Endothelial cell of umbilical vein (primary cell): ENCODE measurements at regions of chr12 and their contacts with region 1.

Region 1: DNA sequence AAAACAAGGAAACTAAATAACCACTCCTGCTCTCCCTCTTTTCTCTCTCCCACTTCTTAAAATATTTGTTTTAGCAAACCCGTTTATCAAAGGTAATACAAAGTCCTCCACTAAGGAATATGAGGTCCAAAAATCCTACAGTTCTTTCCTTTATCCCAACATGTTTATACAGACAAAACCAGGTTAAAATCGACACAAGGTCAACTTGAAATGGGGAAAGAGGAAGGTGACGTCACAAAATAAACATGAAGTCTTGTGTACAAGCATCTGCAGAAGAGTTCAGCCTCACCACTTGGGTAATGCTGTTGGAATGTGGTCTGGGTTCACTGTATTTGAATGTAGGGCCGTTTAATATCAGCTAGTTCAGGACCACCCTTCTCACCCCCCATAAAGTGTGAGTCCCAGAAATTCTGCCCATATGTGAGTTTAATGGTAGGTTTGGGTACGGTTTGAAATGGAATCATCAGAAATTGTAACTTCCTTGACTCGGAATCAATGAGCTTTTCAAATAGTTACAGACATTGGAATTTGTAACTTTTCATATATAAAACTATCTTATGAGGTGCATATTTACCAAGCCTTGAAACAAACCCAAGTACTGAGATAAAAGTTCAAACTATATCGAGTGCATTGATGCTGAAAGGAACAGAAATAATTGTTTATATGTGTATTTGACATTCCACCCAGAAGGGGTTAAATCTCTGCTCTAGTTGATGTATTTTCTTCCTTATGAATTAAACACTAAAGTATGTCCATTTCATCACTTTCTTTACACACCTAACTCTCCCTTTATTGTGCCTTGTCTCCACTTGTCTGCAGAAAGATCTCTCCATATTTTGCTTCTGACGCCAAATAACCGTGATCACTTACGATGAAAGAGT is 120.1 kb upstream of the SLC38A2 start:
- DNase-seq: peak; percentile 93
- H3K4me3 ChIP-seq: no peak overlapping the region
- H3K27ac ChIP-seq: peak overlapping the region; percentile 97
- H3K4me1 ChIP-seq: peaks cover 43% of the 10 kb centered on the region
- H3K27me3 ChIP-seq: no peaks in the 10 kb centered on the region
- CTCF ChIP-seq: no peak
- POLR2A ChIP-seq: peak; percentile 63

Region 2: DNA sequence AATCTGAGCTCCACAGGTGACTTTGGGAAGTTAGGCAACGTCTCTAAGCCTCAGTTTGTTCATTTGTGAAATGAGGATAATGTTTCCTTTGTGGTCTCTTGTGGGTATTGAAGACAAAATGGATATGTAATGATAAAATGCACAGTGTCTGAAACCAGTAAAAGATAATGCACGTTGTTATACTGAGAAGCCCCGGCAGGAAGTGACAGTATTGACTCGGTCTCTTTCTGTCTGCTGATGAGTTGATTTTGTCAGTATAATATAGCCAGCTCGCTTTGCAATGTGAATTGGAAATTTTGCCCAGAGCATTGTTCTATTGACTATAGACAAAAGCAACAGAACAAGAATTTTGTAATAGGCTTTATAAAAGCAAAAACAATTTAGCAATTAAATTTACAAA is 174.7 kb before region 1 on chr12:
- CTCF ChIA-PET with region 1: no interaction called
- POLR2A ChIA-PET with region 1: no interaction called
- dilution Hi-C with region 1: no loop called
- intact Hi-C with region 1: no loop called
- DNase-seq: no peak
- H3K4me3 ChIP-seq: no peak overlapping the region
- H3K27ac ChIP-seq: no peak overlapping the region
- H3K4me1 ChIP-seq: peaks cover 10% of the 10 kb centered on the region
- H3K27me3 ChIP-seq: no peaks in the 10 kb centered on the region
- CTCF ChIP-seq: no peak
- POLR2A ChIP-seq: no peak

Region 3: GRCh38 chr12:46382964-46383653 is 109.6 kb before region 1 on chr12:
- CTCF ChIA-PET with region 1: interaction called, 3 read pairs
- POLR2A ChIA-PET with region 1: interaction called, 5 read pairs
- dilution Hi-C with region 1: no loop called
- intact Hi-C with region 1: loop called (anchors 1 kb)
- DNase-seq: peak; percentile 97
- H3K4me3 ChIP-seq: peak overlapping the region; percentile 39 to 68 (median 44)
- H3K27ac ChIP-seq: peak overlapping the region; percentile 98
- H3K4me1 ChIP-seq: peaks cover 44% of the 10 kb centered on the region
- H3K27me3 ChIP-seq: no peaks in the 10 kb centered on the region
- CTCF ChIP-seq: peak in 1 of 2 donors; percentile 14
- POLR2A ChIP-seq: peak; percentile 76

Region 4: GRCh38 chr12:46450279-46450748 is 42.4 kb before region 1 on chr12:
- CTCF ChIA-PET with region 1: no interaction called
- POLR2A ChIA-PET with region 1: no interaction called
- dilution Hi-C with region 1: no loop called
- intact Hi-C with region 1: loop called (anchors 1 kb)
- DNase-seq: peak; percentile 73
- H3K4me3 ChIP-seq: no peak overlapping the region
- H3K27ac ChIP-seq: peak overlapping the region; percentile 84
- H3K4me1 ChIP-seq: peaks cover 64% of the 10 kb centered on the region
- H3K27me3 ChIP-seq: no peaks in the 10 kb centered on the region
- CTCF ChIP-seq: no peak
- POLR2A ChIP-seq: no peak

Region 5: DNA sequence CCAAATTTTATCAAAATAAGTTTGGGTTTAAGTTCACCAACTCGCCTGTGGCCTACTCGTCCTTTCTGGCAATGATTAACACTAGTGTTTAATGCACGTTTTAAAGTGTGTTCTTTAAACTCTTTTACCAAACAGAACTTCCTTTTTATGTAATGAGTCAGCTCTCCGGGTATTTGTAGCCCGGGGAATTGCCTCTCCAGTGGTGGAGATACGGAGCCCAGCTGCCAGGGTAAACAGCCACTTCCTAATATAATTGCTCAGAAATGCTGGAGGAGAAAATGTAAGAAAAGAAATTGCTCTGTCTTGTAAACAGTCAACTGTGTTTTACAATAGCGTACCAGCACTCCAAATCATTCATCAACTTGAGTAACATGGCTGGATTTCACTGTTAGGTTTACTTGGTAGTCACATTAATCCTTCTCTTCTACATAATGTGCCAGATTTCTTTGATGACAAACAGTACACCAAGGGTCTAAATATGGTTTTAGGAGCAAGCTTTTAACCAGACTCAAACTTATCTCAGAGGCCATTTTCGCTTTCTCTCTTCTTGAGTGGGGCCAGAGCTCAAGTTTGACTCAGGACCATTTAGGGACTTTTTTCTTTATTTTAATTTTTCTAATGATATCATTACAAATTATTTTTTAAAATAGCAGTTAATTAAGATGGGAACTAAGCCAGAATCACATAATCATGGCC is 18.9 kb before region 1 on chr12:
- CTCF ChIA-PET with region 1: interaction called, 5 read pairs
- POLR2A ChIA-PET with region 1: interaction called, 4 read pairs
- dilution Hi-C with region 1: no loop called
- intact Hi-C with region 1: loop called (anchors 1 kb)
- DNase-seq: peak; percentile 98
- H3K4me3 ChIP-seq: peak overlapping the region in 1 of 3 experiments; percentile 29
- H3K27ac ChIP-seq: peak overlapping the region; percentile 94
- H3K4me1 ChIP-seq: peaks cover 56% of the 10 kb centered on the region
- H3K27me3 ChIP-seq: no peaks in the 10 kb centered on the region
- CTCF ChIP-seq: no peak
- POLR2A ChIP-seq: peak; percentile 19

Region 6: GRCh38 chr12:46523863-46524770 is 31.4 kb after region 1 on chr12:
- CTCF ChIA-PET with region 1: interaction called, 3 read pairs
- POLR2A ChIA-PET with region 1: no interaction called
- dilution Hi-C with region 1: no loop called
- intact Hi-C with region 1: loop called (anchors 2 kb)
- DNase-seq: peak; percentile 83
- H3K4me3 ChIP-seq: peak overlapping the region in 1 of 3 experiments; percentile 34
- H3K27ac ChIP-seq: peak overlapping the region; percentile 81
- H3K4me1 ChIP-seq: peaks cover 33% of the 10 kb centered on the region
- H3K27me3 ChIP-seq: no peaks in the 10 kb centered on the region
- CTCF ChIP-seq: no peak
- POLR2A ChIP-seq: no peak

Region 7: DNA sequence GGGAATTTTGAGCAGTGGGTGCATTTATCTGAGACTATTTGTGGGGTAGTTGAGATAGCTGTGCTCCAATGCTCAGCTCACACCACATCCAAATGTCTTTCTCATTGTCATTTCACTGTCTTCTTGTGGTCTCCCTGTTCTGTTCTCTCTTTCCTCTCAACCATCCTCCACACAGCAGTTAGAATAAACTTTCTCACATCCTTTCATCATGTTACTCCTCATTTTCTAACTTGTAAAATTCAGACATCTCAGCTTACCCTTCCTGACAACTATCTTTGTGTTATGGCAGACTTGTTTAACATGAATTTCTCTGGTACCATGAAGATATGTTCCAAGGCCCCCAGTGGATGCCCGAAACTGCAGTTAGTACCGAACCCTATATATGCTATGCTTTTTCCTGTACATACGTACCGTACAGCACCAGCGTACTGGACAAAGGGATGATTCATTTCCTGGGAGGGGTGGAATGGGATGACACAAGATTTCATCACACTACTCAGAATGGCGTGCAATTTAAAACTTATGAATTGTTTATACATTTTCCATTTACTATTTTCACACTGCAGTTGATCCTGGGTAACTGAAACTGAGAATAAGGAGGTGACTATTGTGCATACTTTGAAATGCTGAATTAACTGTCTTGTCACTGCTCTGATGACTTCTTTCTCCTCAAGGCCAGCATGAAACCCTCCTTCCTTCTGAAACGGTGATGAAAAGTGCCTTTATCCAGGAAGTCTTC is 57.0 kb after region 1 on chr12:
- CTCF ChIA-PET with region 1: no interaction called
- POLR2A ChIA-PET with region 1: no interaction called
- dilution Hi-C with region 1: no loop called
- intact Hi-C with region 1: loop called (anchors 2 kb)
- DNase-seq: peak; percentile 61
- H3K4me3 ChIP-seq: no peak overlapping the region
- H3K27ac ChIP-seq: peak overlapping the region; percentile 27
- H3K4me1 ChIP-seq: peaks cover 23% of the 10 kb centered on the region
- H3K27me3 ChIP-seq: no peaks in the 10 kb centered on the region
- CTCF ChIP-seq: no peak
- POLR2A ChIP-seq: no peak

Region 8: GRCh38 chr12:46562625-46563228 is 70.0 kb after region 1 on chr12:
- CTCF ChIA-PET with region 1: no interaction called
- POLR2A ChIA-PET with region 1: no interaction called
- dilution Hi-C with region 1: no loop called
- intact Hi-C with region 1: loop called (anchors 1 kb)
- DNase-seq: peak; percentile 94
- H3K4me3 ChIP-seq: peak overlapping the region in 1 of 3 experiments; percentile 28
- H3K27ac ChIP-seq: peak overlapping the region; percentile 96
- H3K4me1 ChIP-seq: peaks cover 24% of the 10 kb centered on the region
- H3K27me3 ChIP-seq: no peaks in the 10 kb centered on the region
- CTCF ChIP-seq: no peak
- POLR2A ChIP-seq: peak; percentile 39